OCI-LY7 (cell line): ENCODE measurements at regions of chr1 and their contacts with region 1.

Region 1: DNA sequence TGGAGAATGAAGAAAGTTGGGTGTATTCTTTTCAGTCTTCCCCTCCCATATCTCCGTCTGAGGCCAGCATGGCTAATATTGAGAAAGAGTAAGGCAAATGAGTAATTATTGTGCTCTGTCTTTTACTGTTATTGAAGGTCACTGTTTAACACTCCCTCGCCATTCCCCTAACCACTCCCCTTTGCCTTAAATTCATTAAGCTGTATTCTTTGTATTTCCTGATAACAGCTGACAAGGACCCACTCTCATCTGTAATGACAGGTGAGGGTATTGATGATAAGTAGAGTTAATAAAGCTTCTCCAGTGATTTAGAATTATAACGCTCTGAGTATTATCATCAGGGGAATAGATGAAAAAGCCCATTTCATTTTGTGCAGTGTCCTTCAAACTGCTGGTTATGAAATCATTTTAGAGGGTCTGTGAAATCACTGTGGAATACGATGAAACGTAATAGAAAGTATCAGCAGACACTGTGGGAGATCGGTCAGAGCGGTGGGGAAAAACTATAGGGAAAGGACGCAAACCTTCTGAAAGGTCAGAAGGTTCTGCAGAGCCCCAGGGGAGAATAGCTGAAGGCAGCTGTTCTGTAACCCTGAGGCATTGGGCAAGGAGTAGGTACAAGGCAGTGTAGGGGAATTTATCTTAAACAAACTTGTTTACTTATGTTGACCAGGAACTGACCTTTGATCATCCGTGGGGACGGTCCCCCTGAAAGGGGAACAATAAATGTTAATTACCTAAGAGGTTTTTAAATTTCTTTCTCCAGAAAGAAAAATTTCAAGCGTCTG is 46.3 kb upstream of the CACYBP start:
- DNase-seq: no peak
- H3K4me3 ChIP-seq: peak overlapping the region; percentile 52
- H3K27ac ChIP-seq: peak overlapping the region; percentile 77
- H3K4me1 ChIP-seq: peaks cover 84% of the 10 kb centered on the region
- CTCF ChIP-seq: no peak

Region 2: DNA sequence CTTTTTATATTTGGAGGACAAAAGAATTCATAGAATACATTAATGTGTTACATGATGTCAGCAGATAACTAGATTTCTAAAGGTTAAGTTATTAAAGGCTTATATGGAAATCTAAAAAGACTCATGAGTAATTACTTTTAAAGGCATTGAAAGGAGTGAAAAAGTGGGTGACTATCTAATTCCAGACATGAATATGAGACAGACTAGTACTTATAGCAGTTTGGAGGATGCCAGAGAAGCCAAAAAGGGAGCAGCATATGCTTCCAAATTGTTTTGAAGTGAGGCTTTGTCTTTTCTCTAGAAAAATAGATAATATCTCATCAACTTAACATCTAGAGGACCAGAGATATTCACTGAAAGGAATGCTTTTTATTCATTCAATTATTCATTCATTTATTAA is 229.3 kb before region 1 on chr1:
- CTCF ChIA-PET with region 1: no interaction called
- POLR2A ChIA-PET with region 1: no interaction called
- intact Hi-C with region 1: no loop called
- DNase-seq: no peak
- H3K4me3 ChIP-seq: no peak overlapping the region
- H3K27ac ChIP-seq: no peak overlapping the region
- H3K4me1 ChIP-seq: peaks cover 5% of the 10 kb centered on the region
- CTCF ChIP-seq: no peak

Region 3: DNA sequence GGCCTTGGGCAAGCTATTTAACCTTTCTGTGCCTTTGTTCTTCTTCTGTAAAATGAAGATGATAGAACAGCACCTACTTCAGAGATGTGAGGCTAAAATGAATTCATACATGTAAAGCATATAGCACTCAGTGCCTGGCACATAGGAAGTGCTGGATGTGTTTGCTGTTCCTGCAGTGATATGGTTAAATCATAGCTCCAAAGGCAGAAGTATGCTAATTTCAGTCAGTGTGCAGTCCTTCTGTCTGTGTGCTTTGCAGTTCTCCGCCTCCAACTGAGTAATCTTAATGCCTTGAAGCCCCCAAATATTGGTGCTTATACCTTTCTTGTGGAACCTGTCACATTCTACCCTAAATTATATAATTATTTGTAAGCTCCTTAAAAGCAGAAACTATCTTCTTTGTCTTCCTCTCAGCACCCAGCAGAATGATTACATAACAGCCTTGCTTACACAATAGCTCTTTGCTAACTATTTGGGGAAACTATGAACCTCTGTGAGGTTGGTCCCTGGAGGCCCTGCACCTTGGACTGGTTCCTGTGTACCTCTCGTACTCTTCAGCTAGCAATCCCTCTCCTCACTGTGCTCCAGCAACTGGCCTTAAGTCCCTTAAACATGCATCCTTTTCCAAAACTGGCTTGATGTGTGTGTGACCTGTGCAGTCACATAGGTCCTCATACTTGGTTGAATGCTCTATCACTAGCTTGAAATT is 10.8 kb before region 1 on chr1:
- CTCF ChIA-PET with region 1: interaction called, 4 read pairs
- POLR2A ChIA-PET with region 1: interaction called, 34 read pairs
- intact Hi-C with region 1: no loop called
- DNase-seq: peak; percentile 84
- H3K4me3 ChIP-seq: peak overlapping the region; percentile 45
- H3K27ac ChIP-seq: peak overlapping the region; percentile 74
- H3K4me1 ChIP-seq: peaks cover 63% of the 10 kb centered on the region
- CTCF ChIP-seq: no peak

Region 4: DNA sequence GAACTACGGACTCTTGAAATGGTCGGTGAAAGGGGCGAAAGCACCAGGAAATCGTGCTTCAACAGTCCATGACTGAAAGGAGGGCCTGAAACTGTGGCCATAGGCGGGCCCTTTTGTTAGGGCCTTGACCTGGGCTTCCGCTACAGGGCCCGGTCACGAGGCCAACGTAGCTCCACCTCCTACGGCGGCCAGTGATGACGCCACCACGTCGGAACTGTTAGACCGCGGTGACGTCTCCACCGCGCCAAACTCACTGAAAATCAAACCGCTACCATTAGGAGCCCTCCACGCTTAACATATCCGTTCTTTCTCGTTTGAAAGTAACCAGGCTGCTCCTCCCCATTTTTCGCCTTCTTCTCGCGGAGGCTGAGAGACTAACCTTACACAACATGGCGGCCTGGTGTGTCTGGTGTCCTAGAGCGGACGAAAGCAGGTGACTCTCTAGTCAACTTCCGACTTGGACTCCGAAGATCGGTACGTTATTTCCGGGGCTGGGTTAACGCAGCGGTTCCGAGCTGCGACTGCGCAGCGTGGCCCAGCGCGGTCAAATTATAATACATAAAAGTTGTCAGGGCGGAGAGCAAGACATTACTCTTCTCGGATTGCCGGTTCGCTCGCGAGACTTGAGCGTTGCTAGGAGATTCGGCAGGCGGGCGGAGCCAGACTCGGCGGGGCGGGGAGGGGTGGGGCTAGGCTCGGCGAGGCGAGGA is 45.9 kb after region 1 on chr1:
- CTCF ChIA-PET with region 1: no interaction called
- POLR2A ChIA-PET with region 1: no interaction called
- intact Hi-C with region 1: no loop called
- DNase-seq: peak; percentile 99
- H3K4me3 ChIP-seq: peak overlapping the region; percentile 95
- H3K27ac ChIP-seq: peak overlapping the region; percentile 92
- H3K4me1 ChIP-seq: peaks cover 41% of the 10 kb centered on the region
- CTCF ChIP-seq: no peak